ENCODE measurements at regions of chr2 and their contacts with region 1.

Region 1: GRCh38 chr2:48343571-48344440 is 186.1 kb upstream of the STON1 start:
- DNase-seq: no peak
- H3K4me3 Mint-ChIP-seq: peak overlapping the region; percentile 66
- H3K27ac Mint-ChIP-seq: peak overlapping the region; percentile 78
- H3K4me1 Mint-ChIP-seq: peaks cover 21% of the 10 kb centered on the region
- H3K27me3 Mint-ChIP-seq: no peaks in the 10 kb centered on the region
- CTCF ChIP-seq: no peak

Region 2: GRCh38 chr2:48315896-48316194 is 28.0 kb before region 1 on chr2:
- CTCF ChIA-PET with region 1: no interaction called
- intact Hi-C with region 1: loop called (anchors 2 kb)
- DNase-seq: peak; percentile 28
- H3K4me3 Mint-ChIP-seq: peak overlapping the region; percentile 94
- H3K27ac Mint-ChIP-seq: peak overlapping the region; percentile 87
- H3K4me1 Mint-ChIP-seq: peaks cover 16% of the 10 kb centered on the region
- H3K27me3 Mint-ChIP-seq: no peaks in the 10 kb centered on the region
- CTCF ChIP-seq: no peak